ENCODE measurements at regions of chr4 and their contacts with region 1.

Region 1: GRCh38 chr4:139603576-139604387 is 47.8 kb upstream of the SETD7 start:
- DNase-seq: peak; percentile 61

Region 2: DNA sequence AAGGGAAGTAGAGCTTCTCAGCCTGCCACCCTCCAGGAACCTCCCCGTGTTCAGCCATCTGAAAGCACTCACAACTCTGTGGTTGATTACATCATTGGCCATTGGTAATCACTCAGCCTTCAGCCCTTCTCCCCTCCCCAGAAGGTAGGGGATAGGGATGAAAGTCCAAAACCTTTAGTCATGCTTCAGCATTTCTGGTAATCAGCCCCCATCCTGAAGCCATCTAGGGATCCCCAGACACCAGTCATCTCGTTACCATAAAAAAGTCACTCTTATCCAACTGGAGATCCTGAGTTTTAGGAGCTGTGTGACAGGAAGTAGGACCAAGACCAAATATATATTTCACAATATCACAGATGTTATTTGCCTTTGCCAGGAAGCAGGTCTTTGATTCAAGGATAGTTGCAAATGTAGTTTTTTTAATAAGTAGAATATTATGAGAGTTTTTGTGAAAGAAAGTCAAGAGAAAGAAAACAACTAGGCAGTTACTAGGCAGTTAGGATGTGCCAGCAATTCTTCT is 952.8 kb before region 1 on chr4:
- CTCF ChIA-PET with region 1: no interaction called
- POLR2A ChIA-PET with region 1: no interaction called
- DNase-seq: no peak

Region 3: GRCh38 chr4:139253713-139254112 is 350.1 kb before region 1 on chr4:
- CTCF ChIA-PET with region 1: no interaction called
- POLR2A ChIA-PET with region 1: no interaction called
- DNase-seq: no peak

Region 4: GRCh38 chr4:139554893-139555704 is 48.7 kb before region 1 on chr4:
- CTCF ChIA-PET with region 1: interaction called, 4 read pairs
- POLR2A ChIA-PET with region 1: interaction called, 12 read pairs
- DNase-seq: peak; percentile 83

Region 5: GRCh38 chr4:139593091-139593564 is 10.7 kb before region 1 on chr4:
- CTCF ChIA-PET with region 1: interaction called, 13 read pairs
- POLR2A ChIA-PET with region 1: interaction called, 9 read pairs
- DNase-seq: peak; percentile 60

Region 6: DNA sequence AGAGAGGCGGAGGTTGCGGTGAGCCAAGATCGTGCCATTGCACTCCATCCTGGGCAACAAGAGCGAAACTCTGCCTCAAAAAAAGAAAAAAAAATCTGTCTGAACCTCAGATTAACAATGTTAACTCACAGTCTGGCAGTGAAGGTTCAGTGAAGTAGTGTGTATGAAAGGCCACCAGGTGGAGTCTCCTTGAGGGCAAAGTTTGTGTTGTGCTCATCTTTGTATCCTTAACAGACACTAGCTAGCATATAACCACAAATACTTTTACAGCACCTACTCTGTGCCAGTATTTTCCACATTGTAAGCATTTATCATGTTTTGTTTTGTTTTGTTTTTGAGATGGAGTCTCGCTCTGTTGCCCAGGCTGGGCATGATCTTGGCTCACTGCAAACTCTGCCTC is 15.9 kb after region 1 on chr4:
- CTCF ChIA-PET with region 1: interaction called, 20 read pairs
- POLR2A ChIA-PET with region 1: no interaction called
- DNase-seq: peak; percentile 45

Region 7: DNA sequence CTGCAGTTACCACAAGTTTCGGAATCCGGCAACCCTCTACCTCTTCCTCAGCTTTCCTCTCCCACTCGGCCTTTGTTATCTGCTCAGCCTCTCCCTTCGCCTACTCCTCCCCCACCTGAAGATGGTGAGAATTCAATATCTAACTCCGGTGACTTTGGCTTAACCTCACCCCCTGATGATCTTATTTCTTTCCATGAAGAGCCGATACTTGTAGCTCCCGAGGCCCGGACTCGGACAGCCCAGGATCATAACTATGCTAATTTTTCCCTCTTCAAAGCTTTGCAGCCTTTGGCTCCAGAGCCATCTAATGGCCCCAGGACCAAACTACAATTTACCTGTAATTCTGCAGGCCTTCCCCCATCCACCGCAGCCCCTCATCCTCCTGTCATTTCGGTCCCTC is 29.9 kb after region 1 on chr4:
- CTCF ChIA-PET with region 1: interaction called, 29 read pairs
- POLR2A ChIA-PET with region 1: interaction called, 8 read pairs
- DNase-seq: peak; percentile 60

Region 8: GRCh38 chr4:139651282-139652194 is 47.8 kb after region 1 on chr4:
- CTCF ChIA-PET with region 1: interaction called, 58 read pairs
- POLR2A ChIA-PET with region 1: interaction called, 3 read pairs
- DNase-seq: peak; percentile 71

Region 9: DNA sequence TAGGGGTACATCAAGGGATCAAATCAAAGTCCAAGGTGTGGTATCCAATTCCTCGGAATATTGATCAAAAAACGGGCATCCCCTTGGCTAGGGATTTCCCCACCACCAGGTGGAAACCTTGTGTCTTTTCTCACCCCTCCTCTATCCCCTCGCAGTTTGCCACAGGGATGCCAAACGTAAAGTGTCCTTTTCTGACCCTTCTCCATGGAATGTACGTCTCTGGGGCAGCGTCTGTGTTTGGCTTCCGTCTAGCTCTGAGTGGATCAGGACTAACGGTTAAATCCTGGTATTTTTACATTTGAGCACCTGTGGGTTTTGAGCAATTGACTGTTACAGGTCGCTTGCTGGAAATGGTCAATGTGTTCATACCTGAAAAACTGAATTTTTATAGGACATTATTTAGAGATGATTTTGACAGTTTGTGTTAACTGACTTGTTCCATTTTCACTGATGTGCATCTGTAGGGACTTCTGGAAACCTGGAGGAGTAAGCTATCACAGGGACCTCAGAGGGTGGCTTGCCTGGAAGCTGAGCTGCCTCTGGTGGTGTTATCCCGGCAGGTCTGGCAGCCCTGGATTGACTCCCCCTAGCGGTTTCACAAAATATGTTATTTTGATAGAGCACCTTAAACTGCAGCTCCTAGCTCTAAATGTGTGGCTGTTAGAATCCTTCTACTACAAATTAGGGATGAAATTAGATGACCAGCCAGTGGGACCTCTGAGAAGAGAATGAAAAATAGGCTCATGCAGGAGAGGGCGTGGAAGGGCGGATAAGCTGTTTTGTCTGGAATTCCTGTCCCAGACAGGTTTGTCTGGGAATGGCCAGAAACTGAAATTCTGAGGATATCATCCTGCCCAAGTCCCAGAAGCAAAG is 53.1 kb after region 1 on chr4:
- CTCF ChIA-PET with region 1: interaction called, 58 read pairs
- POLR2A ChIA-PET with region 1: interaction called, 3 read pairs
- DNase-seq: peak; percentile 81